ENCODE measurements at regions of chr14 and their contacts with region 1.

Region 1: DNA sequence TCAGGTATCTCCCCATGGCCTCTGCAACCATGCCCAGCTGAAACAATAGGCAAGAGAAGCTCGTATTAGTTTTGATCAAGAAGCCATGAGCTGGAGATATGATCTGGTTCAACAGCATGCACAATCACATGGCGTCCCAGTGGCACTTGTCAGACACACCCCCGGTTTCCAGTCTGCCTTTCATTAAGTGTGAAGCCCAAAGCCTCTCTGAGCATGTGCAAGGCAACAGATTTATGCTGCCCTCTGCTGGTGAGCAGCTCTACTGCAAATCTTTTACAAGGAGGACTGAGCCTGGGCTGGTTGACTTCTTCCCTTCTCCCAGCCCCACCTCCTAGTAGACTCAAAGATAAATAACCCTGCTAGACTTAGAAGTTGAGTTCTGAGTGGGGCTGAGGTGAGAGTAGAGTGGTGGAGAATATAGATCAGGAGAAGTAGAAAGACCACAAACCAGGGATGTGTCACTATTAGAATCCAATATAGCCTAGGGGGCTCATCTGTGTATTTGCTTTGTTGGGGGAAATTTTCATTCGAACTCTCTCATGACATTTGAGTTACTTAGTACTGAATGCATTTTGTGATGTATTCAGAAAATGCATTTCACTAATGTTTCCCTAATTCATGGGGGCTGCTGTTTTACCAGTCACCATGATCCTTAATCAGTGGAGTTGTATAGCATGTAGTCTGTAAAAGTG is 53.7 kb upstream of the MBIP start:
- DNase-seq: peak; percentile 74
- H3K4me3 ChIP-seq: no peak overlapping the region
- H3K27ac ChIP-seq: no peak overlapping the region
- H3K4me1 ChIP-seq: no peaks in the 10 kb centered on the region
- H3K27me3 ChIP-seq: no peaks in the 10 kb centered on the region
- CTCF ChIP-seq: peak; percentile 74 to 82
- POLR2A ChIP-seq: no peak

Region 2: GRCh38 chr14:35883677-35884293 is 490.3 kb before region 1 on chr14:
- CTCF ChIA-PET with region 1: interaction called, 18 read pairs
- POLR2A ChIA-PET with region 1: no interaction called
- dilution Hi-C with region 1: no loop called
- intact Hi-C with region 1: loop called (anchors 5 kb)
- DNase-seq: no peak
- H3K4me3 ChIP-seq: no peak overlapping the region
- H3K27ac ChIP-seq: no peak overlapping the region
- H3K4me1 ChIP-seq: peaks cover 6% of the 10 kb centered on the region
- H3K27me3 ChIP-seq: peaks cover 2 to 4% of the 10 kb centered on the region in 2 experiments
- CTCF ChIP-seq: peak; percentile 52 to 53
- POLR2A ChIP-seq: no peak

Region 3: DNA sequence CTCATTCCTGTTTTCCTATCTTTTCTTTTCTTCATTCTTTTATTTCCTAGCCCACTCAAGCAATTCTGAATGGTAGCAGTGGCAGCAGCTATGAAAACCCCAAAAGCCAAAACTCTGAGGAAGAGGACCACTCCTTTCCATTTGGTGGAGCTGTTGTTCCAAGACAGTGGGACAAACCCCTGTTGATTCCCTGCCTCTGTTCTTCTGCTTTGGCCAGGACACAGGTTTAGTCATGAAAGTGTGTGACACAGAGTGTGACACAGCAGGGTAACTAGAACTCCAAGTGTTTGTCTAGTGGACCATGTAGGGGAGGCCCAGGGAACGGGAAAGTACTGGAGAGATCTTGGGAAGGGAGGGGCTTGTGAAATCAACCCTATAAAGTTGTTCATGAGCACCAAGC is 268.7 kb before region 1 on chr14:
- CTCF ChIA-PET with region 1: interaction called, 6 read pairs
- POLR2A ChIA-PET with region 1: no interaction called
- dilution Hi-C with region 1: no loop called
- intact Hi-C with region 1: loop called (anchors 1 kb)
- DNase-seq: no peak
- H3K4me3 ChIP-seq: no peak overlapping the region
- H3K27ac ChIP-seq: no peak overlapping the region
- H3K4me1 ChIP-seq: no peaks in the 10 kb centered on the region
- H3K27me3 ChIP-seq: no peaks in the 10 kb centered on the region
- CTCF ChIP-seq: no peak
- POLR2A ChIP-seq: no peak

Region 4: DNA sequence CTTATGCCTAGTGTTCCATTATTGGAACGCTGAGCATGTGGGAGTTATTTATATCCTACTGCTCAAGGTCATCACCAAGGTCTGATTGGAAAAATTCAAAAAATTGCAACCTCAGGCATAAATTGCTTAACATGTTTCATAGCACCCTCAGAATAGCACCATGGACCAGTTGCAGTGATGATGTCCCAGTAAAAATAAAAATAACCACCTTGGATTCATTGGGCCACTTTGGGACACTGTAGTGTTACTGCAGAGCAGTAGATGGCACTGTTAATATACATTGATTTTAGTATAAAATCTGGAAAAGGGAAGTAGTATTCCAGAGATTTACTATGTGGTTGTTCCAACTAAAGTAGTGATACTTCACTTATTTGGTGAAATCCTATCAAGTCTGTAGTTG is 166.6 kb before region 1 on chr14:
- CTCF ChIA-PET with region 1: interaction called, 28 read pairs
- POLR2A ChIA-PET with region 1: no interaction called
- dilution Hi-C with region 1: no loop called
- intact Hi-C with region 1: loop called (anchors 1 kb)
- DNase-seq: no peak
- H3K4me3 ChIP-seq: no peak overlapping the region
- H3K27ac ChIP-seq: no peak overlapping the region
- H3K4me1 ChIP-seq: no peaks in the 10 kb centered on the region
- H3K27me3 ChIP-seq: peaks cover 3 to 5% of the 10 kb centered on the region in 2 experiments
- CTCF ChIP-seq: no peak
- POLR2A ChIP-seq: no peak

Region 5: GRCh38 chr14:36241183-36241582 is 132.9 kb before region 1 on chr14:
- CTCF ChIA-PET with region 1: interaction called, 46 read pairs
- POLR2A ChIA-PET with region 1: no interaction called
- dilution Hi-C with region 1: no loop called
- intact Hi-C with region 1: loop called (anchors 1 kb)
- DNase-seq: no peak
- H3K4me3 ChIP-seq: no peak overlapping the region
- H3K27ac ChIP-seq: no peak overlapping the region
- H3K4me1 ChIP-seq: no peaks in the 10 kb centered on the region
- H3K27me3 ChIP-seq: no peaks in the 10 kb centered on the region
- CTCF ChIP-seq: no peak
- POLR2A ChIP-seq: no peak

Region 6: DNA sequence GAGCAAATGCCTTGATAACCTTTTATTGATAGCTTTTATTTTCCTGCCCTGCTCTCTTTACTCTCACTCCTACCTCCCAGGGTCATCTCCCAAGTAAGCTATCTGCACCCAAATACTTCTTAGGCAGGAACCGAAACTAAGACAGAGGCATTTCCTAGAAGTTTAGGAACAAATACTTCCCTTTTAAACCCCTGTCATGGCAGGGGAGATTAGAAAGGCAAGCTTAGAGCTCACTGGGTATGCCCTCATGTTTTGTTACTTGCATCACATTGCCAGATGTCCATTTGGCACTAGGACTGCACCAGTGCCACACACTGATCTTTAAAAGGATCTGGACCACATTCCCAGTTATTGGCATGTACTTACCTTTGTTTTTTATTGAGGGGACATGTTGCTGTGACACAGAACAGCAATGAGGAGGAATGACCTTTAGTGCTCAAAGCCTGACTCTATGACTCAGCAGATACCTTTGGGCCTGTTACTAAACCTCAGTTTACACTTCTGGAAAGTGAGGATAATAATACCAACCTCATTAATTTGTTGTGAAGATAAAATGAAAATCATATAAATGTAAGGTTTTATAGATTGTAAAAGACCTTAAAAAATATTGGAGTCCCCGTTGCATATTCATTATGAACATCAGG is 12.8 kb before region 1 on chr14:
- CTCF ChIA-PET with region 1: interaction called, 10 read pairs
- POLR2A ChIA-PET with region 1: no interaction called
- dilution Hi-C with region 1: no loop called
- intact Hi-C with region 1: no loop called
- DNase-seq: no peak
- H3K4me3 ChIP-seq: no peak overlapping the region
- H3K27ac ChIP-seq: no peak overlapping the region
- H3K4me1 ChIP-seq: no peaks in the 10 kb centered on the region
- H3K27me3 ChIP-seq: peaks cover 3 to 6% of the 10 kb centered on the region in 2 experiments
- CTCF ChIP-seq: no peak
- POLR2A ChIP-seq: no peak